GM12878 (cell line): ENCODE measurements at regions of chr18 and their contacts with region 1.

Region 1: GRCh38 chr18:61093965-61094364 is 239.3 kb upstream of the CDH20 start:
- DNase-seq: no peak
- ATAC-seq: no peak
- H3K4me3 ChIP-seq: no peak overlapping the region
- H3K27ac ChIP-seq: no peak overlapping the region
- H3K4me1 ChIP-seq: no peaks in the 10 kb centered on the region
- H3K27me3 ChIP-seq: no peaks in the 10 kb centered on the region; a peak in 1 of 4 replicates
- CTCF ChIP-seq: no peak
- EP300 ChIP-seq: no peak
- POLR2A ChIP-seq: no peak
- RAD21 ChIP-seq: no peak

Region 2: GRCh38 chr18:61496374-61496773 is 402.4 kb after region 1 on chr18:
- CTCF ChIA-PET with region 1: interaction called, 16 read pairs
- POLR2A ChIA-PET with region 1: no interaction called
- RAD21 ChIA-PET with region 1: no interaction called
- SMC1A ChIA-PET with region 1: interaction called, 3 read pairs
- in situ Hi-C with region 1: loop called (anchors 10 kb)
- intact Hi-C with region 1: no loop called
- DNase-seq: no peak
- ATAC-seq: no peak
- H3K4me3 ChIP-seq: no peak overlapping the region
- H3K27ac ChIP-seq: no peak overlapping the region
- H3K4me1 ChIP-seq: no peaks in the 10 kb centered on the region
- H3K27me3 ChIP-seq: no peaks in the 10 kb centered on the region
- CTCF ChIP-seq: no peak
- EP300 ChIP-seq: no peak
- POLR2A ChIP-seq: no peak
- RAD21 ChIP-seq: no peak